CD4-positive, alpha-beta memory T cell (primary cell): ENCODE measurements at regions of chr2 and their contacts with region 1.

Region 1: DNA sequence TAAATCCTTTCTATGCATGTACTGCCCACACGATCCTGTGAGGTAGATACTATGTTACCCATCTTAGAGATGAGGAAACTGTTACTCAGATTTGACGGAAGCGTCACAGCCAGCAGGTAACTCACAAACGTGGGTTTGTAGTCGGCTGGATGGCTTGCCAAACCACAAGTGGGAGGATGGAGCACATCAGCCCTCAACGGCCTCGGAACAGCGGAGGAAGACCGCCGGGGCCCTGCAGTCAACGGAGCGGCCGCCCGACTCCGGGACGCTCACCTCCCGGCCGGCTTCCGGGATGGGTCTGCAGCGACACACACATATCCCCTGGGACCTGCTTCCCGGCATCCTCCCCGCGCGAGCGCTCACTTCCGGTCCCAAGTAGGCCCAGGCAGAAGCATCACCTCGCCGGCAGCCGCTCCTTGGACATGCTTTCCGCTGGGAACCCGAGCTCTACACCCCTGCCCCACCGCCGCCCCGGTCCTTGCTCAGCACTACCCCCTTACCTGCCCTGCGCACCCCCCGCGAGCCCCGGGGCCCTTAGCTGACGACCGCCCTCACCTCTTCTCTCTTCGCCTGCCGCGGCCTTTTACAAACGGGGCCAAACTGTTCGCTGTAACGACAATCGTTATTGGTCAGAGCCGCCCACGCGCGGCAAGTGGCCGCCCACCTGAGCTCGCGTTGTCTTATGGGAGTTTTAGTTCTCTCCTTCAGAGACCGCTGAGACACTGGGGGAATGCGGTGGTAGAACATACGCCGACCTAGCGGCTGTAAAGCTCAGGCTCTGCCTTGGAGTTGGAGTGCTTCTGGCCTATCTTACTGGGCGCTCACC is at the start of gene C2orf42:
- DNase-seq: peak; percentile 96 to 97 (median 97)
- H3K4me3 ChIP-seq: peak within 1 kb of the TSS; percentile 93 to 96
- H3K4me3 Mint-ChIP-seq: peak within 1 kb of the TSS; percentile 90 to 98 (median 96)
- H3K27ac ChIP-seq: peak within 1 kb of the TSS; percentile 81
- H3K27ac Mint-ChIP-seq: peak within 1 kb of the TSS; percentile 98 to 100 (median 99)
- H3K4me1 ChIP-seq: peaks cover 15% of the 10 kb centered on the region
- H3K4me1 Mint-ChIP-seq: peaks cover 15 to 25% (median 20%) of the 10 kb centered on the region in 4 donors
- H3K27me3 ChIP-seq: no peaks in the 10 kb centered on the region
- H3K27me3 Mint-ChIP-seq: peaks cover 0 to 1% of the 10 kb centered on the region in 2 donors
- total RNA-seq, gene C2orf42: 36.7 to 47.9 TPM

Region 2: GRCh38 chr2:69386789-69387734 is 803.6 kb before region 1 on chr2 and contains the start of gene GFPT1:
- CTCF ChIA-PET with region 1: no interaction called
- POLR2A ChIA-PET with region 1: no interaction called
- intact Hi-C with region 1: loop called (anchors 5 kb)
- DNase-seq: peak; percentile 87 to 91 (median 90)
- H3K4me3 ChIP-seq: peak within 1 kb of the TSS; percentile 66 to 77
- H3K4me3 Mint-ChIP-seq: peak within 1 kb of the TSS; percentile 85 to 91 (median 89)
- H3K27ac ChIP-seq: peak within 1 kb of the TSS; percentile 66
- H3K27ac Mint-ChIP-seq: peak within 1 kb of the TSS; percentile 80 to 97 (median 89)
- H3K4me1 ChIP-seq: peaks cover 38% of the 10 kb centered on the region
- H3K4me1 Mint-ChIP-seq: peaks cover 27 to 50% (median 39%) of the 10 kb centered on the region in 4 donors
- H3K27me3 ChIP-seq: no peaks in the 10 kb centered on the region
- H3K27me3 Mint-ChIP-seq: no peaks in the 10 kb centered on the region
- total RNA-seq, gene GFPT1: 23.1 to 25.8 TPM

Region 3: GRCh38 chr2:69893684-69894551 is 296.7 kb before region 1 on chr2 and contains the start of gene SNRNP27:
- CTCF ChIA-PET with region 1: interaction called, 3 read pairs
- POLR2A ChIA-PET with region 1: interaction called, 21 read pairs
- intact Hi-C with region 1: no loop called
- DNase-seq: peak; percentile 77 to 81 (median 80)
- H3K4me3 ChIP-seq: peak within 1 kb of the TSS; percentile 94 to 98
- H3K4me3 Mint-ChIP-seq: peak within 1 kb of the TSS; percentile 92 to 100 (median 100)
- H3K27ac ChIP-seq: peak within 1 kb of the TSS; percentile 89
- H3K27ac Mint-ChIP-seq: peak within 1 kb of the TSS; percentile 95 to 99 (median 98)
- H3K4me1 ChIP-seq: peaks cover 28% of the 10 kb centered on the region
- H3K4me1 Mint-ChIP-seq: peaks cover 22 to 53% (median 36%) of the 10 kb centered on the region in 4 donors
- H3K27me3 ChIP-seq: no peaks in the 10 kb centered on the region
- H3K27me3 Mint-ChIP-seq: no peaks in the 10 kb centered on the region
- total RNA-seq, gene SNRNP27: 44.6 to 48.5 TPM

Region 4: DNA sequence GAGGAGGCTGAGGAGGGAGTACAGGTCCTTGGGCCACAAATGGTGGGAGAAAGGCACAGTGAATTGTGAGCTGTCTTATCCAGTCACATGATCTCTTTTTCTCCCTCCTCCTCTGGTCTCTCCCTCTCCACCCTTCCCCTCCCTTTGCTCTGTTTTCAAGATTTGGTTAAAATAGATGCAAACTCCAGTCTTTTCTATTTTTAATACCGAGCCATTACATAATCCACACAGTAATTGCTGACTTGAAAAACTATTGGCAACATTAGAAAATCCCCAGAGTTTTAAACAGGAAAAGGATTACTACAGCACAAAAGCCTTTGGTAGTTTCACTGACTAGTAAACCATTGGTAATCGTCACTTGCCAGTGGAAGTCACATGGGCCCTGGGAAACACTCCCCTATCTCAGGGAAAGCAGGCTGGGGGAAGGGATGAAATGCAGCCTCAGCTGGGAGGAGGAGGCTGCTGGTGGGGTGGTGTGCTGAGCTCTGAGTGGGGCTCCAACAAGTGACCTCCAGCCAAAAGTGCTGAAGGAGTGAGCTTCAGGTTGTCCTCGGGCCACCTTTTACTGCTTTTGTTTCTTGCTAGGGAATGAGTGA is 160.7 kb before region 1 on chr2:
- CTCF ChIA-PET with region 1: no interaction called
- POLR2A ChIA-PET with region 1: no interaction called
- intact Hi-C with region 1: no loop called
- DNase-seq: no peak
- H3K4me3 ChIP-seq: no peak overlapping the region
- H3K4me3 Mint-ChIP-seq: no peak overlapping the region
- H3K27ac ChIP-seq: no peak overlapping the region
- H3K27ac Mint-ChIP-seq: peak overlapping the region in 1 of 7 donors; percentile 7
- H3K4me1 ChIP-seq: no peaks in the 10 kb centered on the region
- H3K4me1 Mint-ChIP-seq: peaks cover 0 to 10% (median 3%) of the 10 kb centered on the region in 4 donors
- H3K27me3 ChIP-seq: no peaks in the 10 kb centered on the region
- H3K27me3 Mint-ChIP-seq: no peaks in the 10 kb centered on the region

Region 5: DNA sequence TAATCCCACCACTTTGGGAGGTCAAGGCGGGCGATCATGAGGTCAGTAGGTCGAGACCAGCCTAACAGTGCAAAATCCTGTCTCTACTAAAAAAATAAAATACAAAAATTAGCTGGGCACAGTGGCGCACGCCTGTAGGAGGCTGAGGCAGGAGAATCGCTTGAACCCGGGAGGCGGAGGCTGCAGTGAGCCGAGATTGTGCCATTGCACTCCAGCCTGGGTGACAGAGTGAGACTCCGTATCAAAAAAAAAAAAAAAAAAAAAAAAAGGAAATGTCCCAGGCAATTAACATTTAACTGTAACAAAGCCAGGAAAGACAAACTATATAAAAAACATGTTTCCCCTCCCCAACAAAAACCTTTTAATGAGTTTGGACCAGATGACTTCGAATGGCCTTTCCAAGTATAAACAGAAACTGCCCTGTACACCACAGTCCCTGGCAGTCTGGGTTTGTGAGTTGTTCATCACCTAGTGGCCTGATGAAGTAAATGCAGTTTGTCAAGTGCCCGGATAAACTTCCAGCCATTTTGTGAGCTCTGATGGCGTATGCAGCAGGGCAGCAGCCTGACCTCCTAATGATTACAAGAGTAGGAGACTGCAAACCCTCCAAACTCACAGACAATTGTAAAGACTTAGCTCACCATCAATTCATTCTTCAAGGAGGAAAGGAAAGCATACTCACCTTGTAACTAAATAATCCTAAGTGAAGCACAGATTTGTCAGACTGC is 119.9 kb before region 1 on chr2:
- CTCF ChIA-PET with region 1: interaction called, 5 read pairs
- POLR2A ChIA-PET with region 1: interaction called, 19 read pairs
- intact Hi-C with region 1: loop called (anchors 2 kb)
- DNase-seq: peak; percentile 75 to 81 (median 79)
- H3K4me3 ChIP-seq: peak overlapping the region in 1 of 2 donors; percentile 1
- H3K4me3 Mint-ChIP-seq: peak overlapping the region; percentile 67 to 91 (median 80)
- H3K27ac ChIP-seq: peak overlapping the region; percentile 82
- H3K27ac Mint-ChIP-seq: peak overlapping the region; percentile 81 to 99 (median 98)
- H3K4me1 ChIP-seq: peaks cover 39% of the 10 kb centered on the region
- H3K4me1 Mint-ChIP-seq: peaks cover 36 to 55% (median 46%) of the 10 kb centered on the region in 4 donors
- H3K27me3 ChIP-seq: no peaks in the 10 kb centered on the region
- H3K27me3 Mint-ChIP-seq: no peaks in the 10 kb centered on the region

Region 6: DNA sequence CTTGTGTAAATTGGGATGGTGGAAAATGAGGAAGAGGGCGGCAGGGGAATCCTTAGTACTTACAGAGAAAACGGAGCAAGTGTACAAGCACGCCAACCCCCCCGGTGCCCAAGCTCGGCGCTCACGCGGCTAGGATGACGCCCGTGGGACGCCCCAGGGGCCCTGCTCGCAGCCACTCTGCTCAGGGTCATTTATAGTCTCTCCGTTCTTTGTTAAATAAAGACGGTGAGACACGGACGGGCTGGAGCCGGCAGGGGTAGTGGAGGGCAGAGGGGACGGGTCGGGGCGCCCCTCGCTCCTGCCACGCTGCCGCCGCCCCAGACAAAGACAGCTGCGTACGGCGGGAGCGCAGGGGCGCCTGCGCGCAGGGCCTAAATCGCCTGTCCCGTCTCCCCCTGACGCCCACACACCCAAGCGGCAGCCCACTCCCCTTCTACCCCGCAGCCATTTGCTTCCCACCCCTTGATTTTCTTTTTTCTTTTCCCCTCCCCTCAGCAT is 65.6 kb before region 1 on chr2:
- CTCF ChIA-PET with region 1: no interaction called
- POLR2A ChIA-PET with region 1: interaction called, 20 read pairs
- intact Hi-C with region 1: no loop called
- DNase-seq: peak in 2 of 5 donors; percentile 75 to 82
- H3K4me3 ChIP-seq: peak overlapping the region; percentile 29 to 99
- H3K4me3 Mint-ChIP-seq: peak overlapping the region; percentile 89 to 99 (median 94)
- H3K27ac ChIP-seq: peak overlapping the region; percentile 97
- H3K27ac Mint-ChIP-seq: peak overlapping the region; percentile 95 to 100 (median 100)
- H3K4me1 ChIP-seq: peaks cover 64% of the 10 kb centered on the region
- H3K4me1 Mint-ChIP-seq: peaks cover 34 to 73% (median 57%) of the 10 kb centered on the region in 4 donors
- H3K27me3 ChIP-seq: no peaks in the 10 kb centered on the region
- H3K27me3 Mint-ChIP-seq: peaks cover 0 to 3% of the 10 kb centered on the region in 2 donors

Region 7: GRCh38 chr2:70142590-70143313 is 47.9 kb before region 1 on chr2:
- CTCF ChIA-PET with region 1: interaction called, 4 read pairs
- POLR2A ChIA-PET with region 1: interaction called, 43 read pairs
- intact Hi-C with region 1: loop called (anchors 1 kb)
- DNase-seq: peak; percentile 99 to 100 (median 100)
- H3K4me3 ChIP-seq: peak overlapping the region in 1 of 2 donors; percentile 67
- H3K4me3 Mint-ChIP-seq: peak overlapping the region; percentile 85 to 96 (median 90)
- H3K27ac ChIP-seq: peak overlapping the region; percentile 97
- H3K27ac Mint-ChIP-seq: peak overlapping the region; percentile 97 to 100 (median 100)
- H3K4me1 ChIP-seq: peaks cover 56% of the 10 kb centered on the region
- H3K4me1 Mint-ChIP-seq: peaks cover 38 to 67% (median 52%) of the 10 kb centered on the region in 4 donors
- H3K27me3 ChIP-seq: no peaks in the 10 kb centered on the region
- H3K27me3 Mint-ChIP-seq: peaks cover 0 to 2% of the 10 kb centered on the region in 2 donors

Region 8: GRCh38 chr2:70258532-70258874 is 67.9 kb after region 1 on chr2:
- CTCF ChIA-PET with region 1: interaction called, 5 read pairs
- POLR2A ChIA-PET with region 1: interaction called, 44 read pairs
- intact Hi-C with region 1: loop called (anchors 2 kb)
- DNase-seq: peak in 1 of 5 donors; percentile 39
- H3K4me3 ChIP-seq: peak overlapping the region; percentile 10 to 79
- H3K4me3 Mint-ChIP-seq: peak overlapping the region; percentile 87 to 97 (median 93)
- H3K27ac ChIP-seq: peak overlapping the region; percentile 57
- H3K27ac Mint-ChIP-seq: peak overlapping the region; percentile 8 to 86 (median 69)
- H3K4me1 ChIP-seq: peaks cover 17% of the 10 kb centered on the region
- H3K4me1 Mint-ChIP-seq: peaks cover 26 to 48% (median 36%) of the 10 kb centered on the region in 4 donors
- H3K27me3 ChIP-seq: no peaks in the 10 kb centered on the region
- H3K27me3 Mint-ChIP-seq: no peaks in the 10 kb centered on the region